Sciatic nerve (tissue), 2 donors: ENCODE measurements at regions of chr5 and their contacts with region 1.

Region 1: GRCh38 chr5:177390363-177391300 is 6.4 kb downstream of the SLC34A1 start:
- DNase-seq: peak; percentile 87
- ATAC-seq: peak; percentile 89

Region 2: GRCh38 chr5:177500685-177501522 is 110.3 kb after region 1 on chr5:
- intact Hi-C with region 1: loop called (anchors 5 kb)
- DNase-seq: peak; percentile 97
- ATAC-seq: peak; percentile 66